ENCODE measurements at regions of chr1 and their contacts with region 1.

Region 1: GRCh38 chr1:6523566-6523965 is 30.7 kb downstream of the NOL9 start:
- DNase-seq: no peak
- H3K4me3 ChIP-seq: no peak overlapping the region
- CTCF ChIP-seq: peak; percentile 52

Region 2: GRCh38 chr1:6259491-6260425 is 263.8 kb before region 1 on chr1:
- CTCF ChIA-PET with region 1: no interaction called
- POLR2A ChIA-PET with region 1: no interaction called
- DNase-seq: no peak
- H3K4me3 ChIP-seq: peak overlapping the region; percentile 60
- CTCF ChIP-seq: no peak

Region 3: GRCh38 chr1:6483036-6483760 is 40.4 kb before region 1 on chr1:
- CTCF ChIA-PET with region 1: interaction called, 139 read pairs
- POLR2A ChIA-PET with region 1: no interaction called
- DNase-seq: no peak
- H3K4me3 ChIP-seq: no peak overlapping the region
- CTCF ChIP-seq: no peak

Region 4: GRCh38 chr1:6507037-6507428 is 16.5 kb before region 1 on chr1:
- CTCF ChIA-PET with region 1: interaction called, 12 read pairs
- POLR2A ChIA-PET with region 1: no interaction called
- DNase-seq: no peak
- H3K4me3 ChIP-seq: no peak overlapping the region
- CTCF ChIP-seq: no peak

Region 5: GRCh38 chr1:6538956-6539355 is 15.4 kb after region 1 on chr1:
- CTCF ChIA-PET with region 1: interaction called, 88 read pairs
- POLR2A ChIA-PET with region 1: no interaction called
- DNase-seq: peak; percentile 67
- H3K4me3 ChIP-seq: no peak overlapping the region
- CTCF ChIP-seq: no peak

Region 6: GRCh38 chr1:6574025-6574620 is 50.6 kb after region 1 on chr1:
- CTCF ChIA-PET with region 1: no interaction called
- POLR2A ChIA-PET with region 1: no interaction called
- DNase-seq: no peak
- H3K4me3 ChIP-seq: no peak overlapping the region
- CTCF ChIP-seq: no peak